ENCODE measurements at regions of chr3 and their contacts with region 1.

Region 1: DNA sequence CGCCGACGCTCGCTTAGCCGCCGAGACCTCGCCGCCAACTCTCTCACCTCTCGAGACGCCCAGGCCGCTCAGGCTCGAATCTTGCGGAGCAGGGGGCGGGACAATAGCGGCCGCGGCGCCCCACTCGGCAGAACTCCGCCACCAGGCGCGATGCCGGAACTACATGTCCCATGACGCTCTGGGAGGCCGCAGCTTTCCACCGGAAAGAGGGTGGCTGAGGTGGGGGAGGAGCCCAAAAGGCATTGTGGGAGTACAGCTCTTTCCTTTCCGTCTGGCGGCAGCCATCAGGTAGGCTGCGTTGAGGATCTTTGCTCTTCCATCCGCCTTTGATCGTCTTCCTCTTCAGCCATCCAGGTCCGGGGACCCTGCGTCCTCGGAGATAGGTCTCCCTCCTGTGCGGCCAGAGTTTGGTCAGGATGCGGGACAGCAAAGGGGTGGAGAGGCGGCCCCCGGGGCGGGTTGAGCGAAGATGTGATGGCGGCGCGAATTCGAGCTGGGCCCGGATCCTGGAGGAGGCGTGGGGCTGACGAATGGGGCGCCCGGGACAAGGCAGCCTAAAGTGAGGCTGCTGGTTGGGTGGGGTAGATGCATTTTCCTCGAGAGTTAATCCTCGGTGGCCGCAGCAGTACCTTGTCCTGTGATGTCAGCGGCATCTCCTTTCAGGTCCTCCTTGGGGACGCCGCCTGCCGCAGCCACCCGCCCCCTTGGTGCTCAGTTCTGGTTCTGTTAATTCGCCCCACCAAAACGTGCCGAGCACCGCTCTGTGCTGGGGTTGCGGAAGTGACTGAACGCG is at the starts of genes NKIRAS1 and RPL15:
- DNase-seq: peak; percentile 91
- ATAC-seq: peak; percentile 91
- H3K4me3 ChIP-seq: peak within 1 kb of the TSS; percentile 87 to 97
- H3K27ac ChIP-seq: peak within 1 kb of the TSS; percentile 83
- H3K4me1 ChIP-seq: peaks cover 14 to 23% of the 10 kb centered on the region in 2 experiments; a peak in 3 of 4 replicates
- H3K27me3 ChIP-seq: no peaks in the 10 kb centered on the region
- CTCF ChIP-seq: peak in 1 of 3 experiments; percentile 38; a peak in 2 of 6 replicates
- POLR2A ChIP-seq: peak; percentile 99
- RAD21 ChIP-seq: no peak
- total RNA-seq, gene NKIRAS1: 12.0 TPM
- total RNA-seq, gene RPL15: 2,177 TPM

Region 2: DNA sequence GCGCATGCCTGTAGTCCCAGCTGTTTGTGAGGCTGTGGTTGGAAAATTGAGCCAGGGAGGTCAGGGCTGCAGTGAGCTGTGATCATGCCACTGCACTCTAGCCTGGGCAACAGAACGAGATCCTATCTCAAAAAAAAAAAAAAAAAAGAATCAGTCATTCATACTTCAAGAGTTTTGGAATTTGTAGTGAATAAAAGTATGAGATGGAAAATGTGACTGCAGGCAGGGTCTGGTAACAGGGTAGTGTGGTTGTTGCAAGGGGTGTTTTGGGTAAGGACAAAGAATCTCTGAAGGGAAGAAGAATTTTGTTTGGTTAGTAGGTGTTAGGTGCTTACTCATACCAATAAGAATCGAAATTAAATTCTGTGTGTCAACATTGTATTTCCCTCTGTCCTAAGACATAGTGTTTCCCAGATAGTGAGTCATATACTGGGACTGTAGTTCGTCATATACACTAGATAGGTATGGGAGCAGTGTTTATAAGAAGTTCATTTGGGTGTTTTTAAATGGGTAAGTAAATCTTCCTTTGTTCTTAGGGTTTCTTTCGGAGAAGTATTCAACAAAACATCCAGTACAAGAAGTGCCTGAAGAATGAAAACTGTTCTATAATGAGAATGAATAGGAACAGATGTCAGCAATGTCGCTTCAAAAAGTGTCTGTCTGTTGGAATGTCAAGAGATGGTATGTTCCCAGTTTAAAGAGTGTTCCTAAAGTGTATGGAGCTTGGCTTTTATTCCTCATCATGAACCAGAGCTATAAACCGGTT is 42.2 kb after region 1 on chr3:
- CTCF ChIA-PET with region 1: no interaction called
- POLR2A ChIA-PET with region 1: interaction called, 13 read pairs
- RAD21 ChIA-PET with region 1: no interaction called
- intact Hi-C with region 1: no loop called
- DNase-seq: peak; percentile 63
- ATAC-seq: peak; percentile 82
- H3K4me3 ChIP-seq: peak overlapping the region in 1 of 2 experiments; percentile 2; a peak in 1 of 4 replicates
- H3K27ac ChIP-seq: peak overlapping the region; percentile 52
- H3K4me1 ChIP-seq: peaks cover 26 to 52% of the 10 kb centered on the region in 2 experiments
- H3K27me3 ChIP-seq: no peaks in the 10 kb centered on the region
- CTCF ChIP-seq: no peak
- POLR2A ChIP-seq: no peak
- RAD21 ChIP-seq: no peak

Measured in HCT116 (cell line).